ENCODE measurements at regions of chr2 and their contacts with region 1.

Region 1: DNA sequence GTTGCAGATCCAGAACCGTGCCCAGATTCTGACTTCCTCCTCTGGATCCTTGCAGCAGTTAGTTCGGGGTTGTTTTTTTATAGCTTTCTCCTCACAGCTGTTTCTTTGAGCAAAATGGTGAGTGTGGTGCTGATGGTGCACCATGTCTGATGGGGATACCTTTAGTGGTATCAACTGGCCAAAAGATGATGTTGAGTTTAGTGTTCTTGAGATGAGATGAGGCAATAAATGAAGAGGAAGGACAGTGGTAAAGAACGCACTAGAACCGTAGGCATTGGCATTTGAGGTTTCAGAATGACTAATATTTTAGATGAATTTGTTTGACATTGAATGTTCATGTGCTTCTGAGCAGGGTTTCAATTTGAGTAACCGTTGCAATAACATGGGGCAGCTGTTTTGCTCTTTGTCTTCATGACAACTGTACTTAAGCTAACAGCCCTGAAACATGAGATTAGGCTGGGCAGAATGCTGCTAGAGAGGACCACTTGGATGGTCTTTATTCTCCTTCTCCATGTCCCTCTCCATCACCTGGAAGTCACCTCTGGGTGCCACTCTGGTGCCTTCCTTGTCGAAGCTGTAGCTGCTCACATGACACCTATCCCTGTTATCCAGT is 3.9 kb downstream of the CTLA4 start:
- DNase-seq: peak; percentile 88
- H3K4me3 Mint-ChIP-seq: peak overlapping the region; percentile 90
- H3K27ac Mint-ChIP-seq: peak overlapping the region; percentile 100
- H3K4me1 Mint-ChIP-seq: peaks cover 60% of the 10 kb centered on the region
- H3K27me3 Mint-ChIP-seq: no peaks in the 10 kb centered on the region

Region 2: GRCh38 chr2:203656522-203657287 is 214.8 kb before region 1 on chr2:
- intact Hi-C with region 1: no loop called
- DNase-seq: peak; percentile 62
- H3K4me3 Mint-ChIP-seq: peak overlapping the region; percentile 12
- H3K27ac Mint-ChIP-seq: peak overlapping the region; percentile 71
- H3K4me1 Mint-ChIP-seq: peaks cover 37% of the 10 kb centered on the region
- H3K27me3 Mint-ChIP-seq: no peaks in the 10 kb centered on the region

Region 3: GRCh38 chr2:203730076-203730729 is 141.3 kb before region 1 on chr2:
- intact Hi-C with region 1: loop called (anchors 5 kb)
- DNase-seq: peak; percentile 71
- H3K4me3 Mint-ChIP-seq: peak overlapping the region; percentile 71
- H3K27ac Mint-ChIP-seq: peak overlapping the region; percentile 96
- H3K4me1 Mint-ChIP-seq: peaks cover 79% of the 10 kb centered on the region
- H3K27me3 Mint-ChIP-seq: no peaks in the 10 kb centered on the region

Region 4: DNA sequence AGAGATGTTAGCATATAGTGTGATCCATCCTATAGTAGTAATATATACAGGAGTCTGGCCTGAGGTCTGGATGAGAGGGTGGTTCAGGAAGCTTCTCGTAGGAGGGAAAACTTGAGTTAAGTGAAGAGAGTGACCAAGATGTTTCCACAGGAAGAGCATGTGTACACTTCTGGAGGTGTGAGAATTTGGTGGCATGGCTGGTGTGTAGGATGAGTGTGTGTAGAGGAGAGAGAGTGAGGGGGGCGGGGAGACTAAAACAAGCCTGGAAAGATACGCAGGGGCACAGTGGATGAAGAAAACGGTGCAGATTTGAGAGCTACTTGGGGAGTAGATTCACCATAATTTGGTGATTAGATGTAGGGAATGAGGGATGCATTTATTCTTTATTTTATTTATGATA is 47.4 kb before region 1 on chr2:
- intact Hi-C with region 1: loop called (anchors 1 kb)
- DNase-seq: no peak
- H3K4me3 Mint-ChIP-seq: peak overlapping the region; percentile 7
- H3K27ac Mint-ChIP-seq: peak overlapping the region; percentile 54
- H3K4me1 Mint-ChIP-seq: peaks cover 34% of the 10 kb centered on the region
- H3K27me3 Mint-ChIP-seq: no peaks in the 10 kb centered on the region

Region 5: GRCh38 chr2:203853271-203853670 is 18.2 kb before region 1 on chr2:
- intact Hi-C with region 1: loop called (anchors 1 kb)
- DNase-seq: no peak
- H3K4me3 Mint-ChIP-seq: peak overlapping the region; percentile 70
- H3K27ac Mint-ChIP-seq: peak overlapping the region; percentile 89
- H3K4me1 Mint-ChIP-seq: peaks cover 43% of the 10 kb centered on the region
- H3K27me3 Mint-ChIP-seq: no peaks in the 10 kb centered on the region

Region 6: DNA sequence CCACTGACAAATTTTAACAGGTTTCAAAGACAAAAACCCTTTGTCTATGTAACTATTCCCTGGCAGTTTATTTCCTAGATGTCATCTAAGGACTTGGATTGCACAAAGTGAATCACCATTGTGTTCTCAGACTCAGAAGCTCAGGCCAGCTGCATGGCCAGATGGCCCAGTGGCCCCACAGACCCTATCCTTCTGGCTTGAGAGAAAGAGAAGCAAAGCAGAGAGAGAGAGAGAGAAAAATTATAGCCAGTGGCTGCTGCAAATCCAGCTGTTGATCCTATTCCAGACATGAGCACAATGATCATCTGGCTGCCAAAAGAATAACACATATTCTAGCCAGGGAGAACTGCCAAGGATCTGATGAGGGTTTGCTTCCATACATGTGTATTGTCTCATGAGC is 21.9 kb after region 1 on chr2:
- intact Hi-C with region 1: loop called (anchors 1 kb)
- DNase-seq: no peak
- H3K4me3 Mint-ChIP-seq: peak overlapping the region; percentile 21
- H3K27ac Mint-ChIP-seq: peak overlapping the region; percentile 62
- H3K4me1 Mint-ChIP-seq: peaks cover 65% of the 10 kb centered on the region
- H3K27me3 Mint-ChIP-seq: no peaks in the 10 kb centered on the region

Region 7: GRCh38 chr2:203997980-203998809 is 126.7 kb after region 1 on chr2:
- intact Hi-C with region 1: loop called (anchors 2 kb)
- DNase-seq: peak; percentile 57
- H3K4me3 Mint-ChIP-seq: peak overlapping the region; percentile 55
- H3K27ac Mint-ChIP-seq: peak overlapping the region; percentile 69
- H3K4me1 Mint-ChIP-seq: peaks cover 72% of the 10 kb centered on the region
- H3K27me3 Mint-ChIP-seq: no peaks in the 10 kb centered on the region

Measured in activated CD4-positive, alpha-beta T cell treated with anti-CD3 and anti-CD28 coated beads, Interleukin-2, amount 10 ng/mL, durations not matched to agents 24 days and 14 days (primary cell).